Activated T-helper 1 cell treated with anti-CD3 and anti-CD28 coated beads, Interleukin-12 subunit alpha, Interleukin-12 subunit beta, Interleukin-2, Interleukin-4 antibody, amounts not matched to agents 30 ng/mL and 10 ng/mL and 1 ng/mL, durations not matched to agents 14 hours and 24 hours and 36 hours (primary cell): ENCODE measurements at regions of chr11 and their contacts with region 1.

Region 1: GRCh38 chr11:114059278-114059983 is at the start of gene ZBTB16:
- DNase-seq: no peak
- H3K4me3 Mint-ChIP-seq: peak within 1 kb of the TSS; percentile 83
- H3K27ac Mint-ChIP-seq: no peak within 1 kb of the TSS
- H3K4me1 Mint-ChIP-seq: no peaks in the 10 kb centered on the region
- H3K27me3 Mint-ChIP-seq: peaks cover 64% of the 10 kb centered on the region
- total RNA-seq, gene ZBTB16: 3.4 and 3.9 TPM in 2 replicates

Region 2: DNA sequence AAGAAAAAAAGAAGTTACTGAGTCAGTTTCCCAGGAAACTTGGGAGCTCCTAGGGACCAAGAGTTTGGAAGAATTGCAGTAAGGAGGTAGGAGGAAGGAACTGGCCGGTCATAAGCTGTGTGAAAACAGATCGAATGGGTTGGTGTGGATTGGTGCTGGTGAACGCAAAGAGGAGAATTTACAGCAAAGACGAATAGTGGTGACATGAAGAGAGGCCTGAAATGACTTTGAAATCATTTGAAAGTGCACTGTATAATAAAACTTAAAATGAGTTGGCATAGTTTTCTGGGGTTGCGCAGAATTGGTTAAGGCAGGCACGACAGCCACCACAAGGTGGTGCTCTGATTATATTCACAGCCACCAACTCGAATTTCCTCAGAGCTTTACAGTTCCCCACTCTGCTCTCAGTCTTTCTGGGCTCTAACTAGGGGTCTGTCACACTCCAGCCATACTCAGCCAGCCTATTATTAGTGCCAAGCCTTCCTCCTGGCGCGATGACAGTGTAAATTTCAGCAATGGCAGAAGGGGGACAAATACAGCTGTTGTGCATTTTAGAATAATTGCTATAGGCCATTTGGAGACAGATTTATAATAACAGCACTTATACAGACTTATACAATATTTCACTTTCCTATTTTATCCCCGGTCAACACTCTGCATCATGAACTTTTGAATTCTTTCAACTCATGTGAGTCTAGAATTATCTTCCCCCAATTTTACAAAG is 163.1 kb before region 1 on chr11:
- intact Hi-C with region 1: loop called (anchors 10 kb)
- DNase-seq: no peak
- H3K4me3 Mint-ChIP-seq: no peak overlapping the region
- H3K27ac Mint-ChIP-seq: no peak overlapping the region
- H3K4me1 Mint-ChIP-seq: peaks cover 4% of the 10 kb centered on the region
- H3K27me3 Mint-ChIP-seq: peaks cover 13% of the 10 kb centered on the region

Region 3: DNA sequence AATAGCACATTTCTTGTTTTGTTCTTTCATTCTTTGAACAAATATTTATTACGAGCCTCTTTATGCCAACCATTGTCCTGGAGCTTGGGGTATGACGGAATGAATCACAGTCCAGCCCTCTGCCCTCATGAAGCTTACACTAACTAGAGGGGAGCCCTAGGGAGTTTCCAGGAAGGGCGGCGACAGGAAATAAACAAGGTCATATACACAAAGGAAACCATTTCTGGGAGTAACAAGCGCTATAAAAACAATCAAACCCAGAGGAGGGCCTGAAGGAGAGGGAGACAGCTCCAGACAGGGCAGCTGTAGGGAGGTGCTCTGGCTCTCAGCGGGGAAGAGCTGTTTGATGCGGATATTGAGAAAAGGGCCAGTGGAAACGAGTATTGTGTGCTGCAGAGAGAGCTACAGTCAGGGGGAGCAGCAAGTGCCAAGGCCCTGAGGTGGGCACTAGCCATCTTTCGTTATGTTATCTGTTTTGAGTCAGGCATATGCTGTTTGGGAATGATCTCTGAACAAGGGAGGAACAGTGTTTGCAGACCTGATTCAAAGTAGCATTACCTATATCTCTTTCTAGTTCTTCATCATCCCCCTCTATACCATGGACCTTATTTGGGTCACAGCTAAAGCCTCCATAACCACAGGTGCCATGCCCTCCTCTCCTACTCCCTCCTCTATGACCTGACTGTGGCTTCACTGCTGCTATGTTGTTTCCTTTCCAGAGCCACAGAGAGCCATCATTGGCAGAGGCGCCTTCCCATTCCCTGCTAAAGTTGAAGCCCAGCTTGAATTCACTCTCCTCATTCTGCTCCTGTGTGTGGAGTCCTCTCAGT is 15.2 kb before region 1 on chr11:
- intact Hi-C with region 1: no loop called
- DNase-seq: no peak
- H3K4me3 Mint-ChIP-seq: no peak overlapping the region
- H3K27ac Mint-ChIP-seq: peak overlapping the region; percentile 2
- H3K4me1 Mint-ChIP-seq: peaks cover 25% of the 10 kb centered on the region
- H3K27me3 Mint-ChIP-seq: peaks cover 5% of the 10 kb centered on the region